H1 (cell line): ENCODE measurements at regions of chrX and their contacts with region 1.

Region 1: DNA sequence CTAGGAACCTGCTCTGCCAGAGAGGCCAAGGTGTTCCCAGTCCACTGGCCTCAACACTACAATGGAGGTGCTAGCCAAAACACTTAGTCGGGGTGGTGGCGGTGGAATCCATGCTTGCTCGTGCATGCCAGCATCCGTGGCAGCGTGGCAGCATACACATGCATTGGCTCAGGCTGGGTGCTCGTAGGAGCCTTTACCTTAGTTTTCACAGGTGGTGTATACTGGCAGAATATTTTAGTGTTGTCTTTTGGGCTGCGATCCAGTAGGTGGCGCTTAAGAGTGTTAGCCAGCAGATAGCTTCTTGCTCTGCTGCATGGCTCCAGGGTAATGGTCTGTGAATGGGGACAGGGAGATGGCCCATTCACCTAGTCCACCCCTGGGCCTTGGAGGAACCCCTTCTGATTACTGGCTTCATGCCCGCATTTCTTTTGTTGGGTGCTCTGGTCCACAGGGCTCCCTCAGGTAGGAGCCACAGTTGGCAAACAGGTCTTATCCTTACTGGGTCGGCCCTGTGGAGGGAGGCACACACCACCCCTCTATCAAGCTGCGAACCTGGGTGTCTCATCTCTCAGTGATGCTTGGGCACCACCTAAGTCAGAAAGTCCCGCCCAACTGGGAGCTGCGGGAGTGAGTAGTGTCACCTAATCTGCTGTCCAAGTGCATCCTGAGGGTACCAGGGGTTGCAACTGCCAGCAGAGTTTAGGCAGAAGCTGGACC is 40.0 kb downstream of the RIPPLY1 start:
- DNase-seq: peak; percentile 15 to 58
- H3K4me3 ChIP-seq: no peak overlapping the region
- H3K27ac ChIP-seq: no peak overlapping the region
- H3K4me1 ChIP-seq: no peaks in the 10 kb centered on the region
- H3K27me3 ChIP-seq: no peaks in the 10 kb centered on the region
- CTCF ChIP-seq: peak; percentile 13 to 69 (median 53)
- EP300 ChIP-seq: no peak
- POLR2A ChIP-seq: no peak
- RAD21 ChIP-seq: peak in 1 of 2 experiments; percentile 41; a peak in 2 of 4 replicates

Region 2: DNA sequence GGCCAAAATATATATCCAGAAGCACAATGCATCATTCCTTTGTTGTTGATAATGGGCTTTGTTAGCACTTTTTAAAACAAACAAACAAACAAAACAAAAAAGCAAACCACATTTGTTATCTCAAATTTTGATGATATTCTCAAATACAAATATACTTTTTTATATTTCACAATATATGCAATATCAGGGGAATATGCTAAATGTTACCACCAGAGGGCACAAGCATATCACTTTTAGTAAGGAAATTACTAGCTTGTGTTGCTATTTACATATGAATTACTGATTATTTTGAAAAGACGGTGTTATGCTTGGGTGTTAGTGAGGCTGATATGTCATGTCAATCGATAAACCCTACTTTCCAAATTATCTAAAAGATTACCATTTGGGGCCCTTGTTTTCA is 10.9 kb after region 1 on chrX:
- CTCF ChIA-PET with region 1: interaction called, 14 read pairs
- POLR2A ChIA-PET with region 1: no interaction called
- DNase-seq: no peak
- H3K4me3 ChIP-seq: no peak overlapping the region
- H3K27ac ChIP-seq: no peak overlapping the region
- H3K4me1 ChIP-seq: no peaks in the 10 kb centered on the region
- H3K27me3 ChIP-seq: no peaks in the 10 kb centered on the region
- CTCF ChIP-seq: peak in 1 of 3 experiments; percentile 40; a peak in 2 of 4 replicates
- EP300 ChIP-seq: no peak
- POLR2A ChIP-seq: no peak
- RAD21 ChIP-seq: peak in 1 of 2 experiments; percentile 32; a peak in 2 of 4 replicates

Region 3: DNA sequence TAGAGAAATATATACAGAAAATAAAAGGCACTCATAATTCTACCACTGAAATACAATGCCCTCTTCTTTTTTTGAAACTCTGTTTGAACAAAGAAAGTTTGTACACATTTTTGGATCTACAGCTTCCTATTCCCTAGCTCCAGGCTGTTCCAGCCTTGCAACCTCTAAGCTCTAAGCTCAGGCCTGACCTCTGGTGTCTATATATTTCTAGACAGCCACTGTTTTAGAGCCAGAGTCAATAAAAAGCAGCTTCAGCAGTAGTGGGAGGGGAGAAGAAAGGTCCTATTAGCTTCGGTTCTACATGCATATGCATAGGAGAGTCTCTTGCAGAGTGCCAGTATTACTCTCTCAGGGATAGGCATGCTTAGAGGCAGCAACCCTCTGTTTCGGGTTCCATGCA is 96.8 kb after region 1 on chrX:
- CTCF ChIA-PET with region 1: no interaction called
- POLR2A ChIA-PET with region 1: no interaction called
- DNase-seq: no peak
- H3K4me3 ChIP-seq: no peak overlapping the region
- H3K27ac ChIP-seq: no peak overlapping the region
- H3K4me1 ChIP-seq: no peaks in the 10 kb centered on the region
- H3K27me3 ChIP-seq: no peaks in the 10 kb centered on the region
- CTCF ChIP-seq: peak in 2 of 3 experiments; percentile 25 to 43; a peak in 3 of 4 replicates
- EP300 ChIP-seq: no peak
- POLR2A ChIP-seq: no peak
- RAD21 ChIP-seq: peak; percentile 27 to 47